Activated T-helper 1 cell treated with anti-CD3 and anti-CD28 coated beads, Interleukin-12 subunit alpha, Interleukin-12 subunit beta, Interleukin-2, Interleukin-4 antibody, amounts not matched to agents 30 ng/mL and 10 ng/mL and 1 ng/mL, durations not matched to agents 14 hours and 24 hours and 36 hours (primary cell): ENCODE measurements at regions of chr9 and their contacts with region 1.

Region 1: GRCh38 chr9:109520478-109521132 is 22.5 kb upstream of the PTPN3 start:
- DNase-seq: peak; percentile 24
- H3K4me3 Mint-ChIP-seq: no peak overlapping the region
- H3K27ac Mint-ChIP-seq: no peak overlapping the region
- H3K4me1 Mint-ChIP-seq: peaks cover 5% of the 10 kb centered on the region
- H3K27me3 Mint-ChIP-seq: peaks cover 17% of the 10 kb centered on the region

Region 2: GRCh38 chr9:109244157-109245132 is 276.2 kb before region 1 on chr9:
- intact Hi-C with region 1: loop called (anchors 1 kb)
- DNase-seq: peak; percentile 42
- H3K4me3 Mint-ChIP-seq: no peak overlapping the region
- H3K27ac Mint-ChIP-seq: no peak overlapping the region
- H3K4me1 Mint-ChIP-seq: no peaks in the 10 kb centered on the region
- H3K27me3 Mint-ChIP-seq: peaks cover 29% of the 10 kb centered on the region

Region 3: GRCh38 chr9:109440797-109441287 is 79.8 kb before region 1 on chr9:
- intact Hi-C with region 1: loop called (anchors 1 kb)
- DNase-seq: peak; percentile 71
- H3K4me3 Mint-ChIP-seq: no peak overlapping the region
- H3K27ac Mint-ChIP-seq: peak overlapping the region; percentile 85
- H3K4me1 Mint-ChIP-seq: peaks cover 34% of the 10 kb centered on the region
- H3K27me3 Mint-ChIP-seq: peaks cover 9% of the 10 kb centered on the region

Region 4: DNA sequence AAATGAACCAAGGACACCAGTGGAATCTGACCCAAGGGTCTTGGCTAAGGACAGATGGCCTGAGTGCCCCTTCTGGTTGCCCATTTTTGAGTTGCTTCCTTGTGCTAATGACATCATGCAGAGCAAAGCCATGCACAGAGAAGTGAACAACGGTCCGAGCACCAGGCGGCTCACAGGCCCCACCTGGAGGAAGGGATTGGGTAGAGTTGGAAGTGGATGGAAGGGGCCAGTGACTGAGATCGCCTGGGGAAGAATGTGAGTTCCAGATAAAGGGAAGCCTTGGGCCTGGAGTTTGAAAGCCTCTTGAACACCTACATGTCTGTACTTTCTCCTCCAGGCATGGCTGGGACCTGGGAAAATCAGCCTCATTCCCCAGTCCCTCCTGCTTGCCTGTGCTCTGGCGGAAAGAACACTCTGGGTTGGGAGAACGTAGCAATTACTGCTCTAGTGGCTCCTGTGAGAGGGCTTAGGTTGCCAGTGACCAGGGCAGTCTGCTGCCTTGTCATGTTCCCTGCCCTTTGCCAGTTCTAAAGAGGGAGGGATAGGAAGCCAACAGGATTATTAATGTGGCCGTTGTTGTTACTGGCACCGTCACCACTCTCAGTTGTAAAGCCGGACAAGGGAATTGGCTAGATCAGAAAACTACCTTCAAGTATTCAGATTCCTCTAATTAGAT is 40.0 kb after region 1 on chr9:
- intact Hi-C with region 1: no loop called
- DNase-seq: no peak
- H3K4me3 Mint-ChIP-seq: no peak overlapping the region
- H3K27ac Mint-ChIP-seq: no peak overlapping the region
- H3K4me1 Mint-ChIP-seq: no peaks in the 10 kb centered on the region
- H3K27me3 Mint-ChIP-seq: peaks cover 24% of the 10 kb centered on the region